ENCODE measurements at regions of chr18 and their contacts with region 1.

Region 1: DNA sequence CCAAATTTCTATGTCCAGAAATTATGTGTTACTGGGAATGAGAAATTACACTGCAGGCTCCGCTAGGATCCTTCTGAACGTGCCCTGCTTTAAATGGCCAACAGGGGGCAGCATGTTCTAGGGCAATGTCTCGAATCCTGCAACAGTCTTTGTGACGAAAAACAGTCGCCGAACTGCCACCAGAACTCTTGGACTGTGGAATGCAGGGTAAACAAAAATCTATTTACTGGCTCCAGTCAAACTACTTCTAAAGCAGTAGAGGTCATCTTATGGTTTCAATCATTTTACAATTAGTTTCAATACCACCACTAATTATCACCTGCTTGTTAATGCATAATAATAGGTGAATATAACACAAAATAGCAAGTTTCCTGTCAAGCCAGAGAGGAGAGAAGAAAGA is 9.8 kb upstream of the ZNF397 start:
- DNase-seq: peak; percentile 86
- ATAC-seq: peak; percentile 80
- H3K4me3 Mint-ChIP-seq: peak overlapping the region; percentile 40
- H3K27ac Mint-ChIP-seq: no peak overlapping the region
- H3K4me1 Mint-ChIP-seq: peaks cover 2% of the 10 kb centered on the region
- H3K27me3 Mint-ChIP-seq: no peaks in the 10 kb centered on the region

Region 2: GRCh38 chr18:35343936-35344735 is 113.1 kb after region 1 on chr18 and contains the start of gene ZNF24:
- CTCF ChIA-PET with region 1: interaction called, 3 read pairs
- POLR2A ChIA-PET with region 1: interaction called, 10 read pairs
- DNase-seq: peak; percentile 95
- ATAC-seq: peak; percentile 85
- H3K4me3 Mint-ChIP-seq: peak within 1 kb of the TSS; percentile 85
- H3K27ac Mint-ChIP-seq: peak within 1 kb of the TSS; percentile 89
- H3K4me1 Mint-ChIP-seq: peaks cover 35% of the 10 kb centered on the region
- H3K27me3 Mint-ChIP-seq: no peaks in the 10 kb centered on the region
- total RNA-seq, gene ZNF24: 48.8 to 53.2 TPM

Region 3: DNA sequence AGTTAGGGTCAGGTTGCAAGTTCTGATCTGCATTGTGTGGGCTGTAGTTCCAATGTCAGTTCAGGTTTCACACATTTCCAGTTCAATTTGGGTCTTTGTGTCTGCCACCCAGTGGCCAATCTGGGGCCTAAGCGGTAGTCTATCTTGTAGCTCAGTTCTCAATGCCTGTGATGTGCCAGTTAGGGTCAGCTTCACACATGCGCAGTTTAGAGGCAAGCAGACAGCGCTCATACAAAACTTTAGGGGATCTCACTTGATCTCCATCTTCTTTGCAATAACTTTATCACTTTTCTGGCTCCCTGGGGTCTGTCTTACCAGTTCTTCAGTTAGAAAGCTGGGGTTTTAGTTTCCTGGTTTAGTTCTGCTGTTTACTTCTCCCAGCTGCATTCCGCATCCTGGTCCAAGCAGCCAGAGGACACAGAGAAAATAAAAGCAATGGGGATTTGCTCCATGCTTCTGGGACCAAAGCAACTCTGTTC is 124.1 kb after region 1 on chr18:
- CTCF ChIA-PET with region 1: interaction called, 23 read pairs
- POLR2A ChIA-PET with region 1: no interaction called
- DNase-seq: peak; percentile 71
- ATAC-seq: peak; percentile 96
- H3K4me3 Mint-ChIP-seq: no peak overlapping the region
- H3K27ac Mint-ChIP-seq: no peak overlapping the region
- H3K4me1 Mint-ChIP-seq: peaks cover 5% of the 10 kb centered on the region
- H3K27me3 Mint-ChIP-seq: peaks cover 2% of the 10 kb centered on the region

Region 4: DNA sequence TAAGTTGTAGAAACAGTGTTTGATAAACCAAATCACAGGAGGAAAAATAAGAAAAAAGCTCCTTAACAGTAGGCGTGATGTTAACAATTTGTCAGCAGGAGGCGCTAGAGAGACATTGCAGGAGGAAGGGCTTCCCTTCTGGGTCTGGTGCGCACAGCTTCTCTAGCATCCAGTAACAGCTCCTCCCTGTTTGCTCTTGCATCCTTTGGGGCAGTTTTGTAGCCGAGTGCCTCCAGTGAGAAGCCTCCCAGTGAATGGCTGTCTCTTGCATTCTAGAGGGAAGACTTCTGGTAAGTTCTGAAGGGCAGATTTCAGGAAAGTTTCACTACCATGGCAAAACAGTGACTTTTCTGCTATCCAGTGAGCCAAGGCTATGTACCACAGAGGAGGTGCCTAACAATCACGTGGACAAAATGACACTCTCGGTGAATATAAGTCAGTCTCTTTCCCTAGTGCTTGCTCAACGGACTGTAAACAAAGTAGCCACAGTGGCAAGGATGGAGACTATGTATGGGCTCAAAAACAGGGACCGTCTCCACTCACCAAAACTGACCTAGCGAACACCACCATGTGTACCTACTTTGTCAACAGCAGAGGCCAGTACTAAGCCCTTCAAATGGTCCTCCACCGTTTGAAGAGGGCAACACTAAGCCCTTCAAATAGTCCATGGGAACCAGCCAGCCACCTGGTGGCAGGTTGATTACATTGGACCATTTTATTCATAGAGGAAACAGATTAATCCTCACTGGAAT is 155.7 kb after region 1 on chr18:
- CTCF ChIA-PET with region 1: interaction called, 21 read pairs
- POLR2A ChIA-PET with region 1: no interaction called
- DNase-seq: peak; percentile 78
- ATAC-seq: peak; percentile 94
- H3K4me3 Mint-ChIP-seq: no peak overlapping the region
- H3K27ac Mint-ChIP-seq: no peak overlapping the region
- H3K4me1 Mint-ChIP-seq: peaks cover 5% of the 10 kb centered on the region
- H3K27me3 Mint-ChIP-seq: peaks cover 29% of the 10 kb centered on the region

Region 5: DNA sequence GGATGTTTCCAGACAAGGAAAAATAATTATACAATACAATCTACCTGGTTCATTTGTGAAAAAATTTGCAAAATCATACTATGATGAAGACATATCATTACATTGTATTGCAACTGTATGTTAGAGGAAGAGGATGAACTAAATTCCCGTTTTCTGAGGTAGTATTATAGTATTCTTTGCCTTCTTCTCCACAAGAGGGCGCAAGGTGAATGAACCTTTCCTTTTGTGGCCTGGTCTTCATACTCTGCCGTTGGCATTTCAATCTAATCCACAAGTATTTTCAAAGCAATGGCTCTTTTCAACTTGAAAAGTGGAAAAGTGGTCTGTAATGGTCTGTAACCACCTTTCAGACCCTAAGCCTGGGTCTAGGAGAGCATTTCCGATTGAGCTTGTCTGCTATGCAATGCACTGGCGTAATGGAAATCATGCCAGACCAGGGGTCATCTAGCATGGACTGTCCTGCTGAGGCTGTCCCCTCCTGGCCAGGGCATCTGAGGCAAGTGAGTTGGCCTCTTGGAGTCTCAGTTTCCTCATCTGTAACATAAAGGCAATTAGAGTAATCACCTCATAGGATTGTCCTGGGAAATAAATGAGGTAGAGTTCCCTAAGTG is 176.9 kb after region 1 on chr18:
- CTCF ChIA-PET with region 1: interaction called, 10 read pairs
- POLR2A ChIA-PET with region 1: no interaction called
- DNase-seq: peak; percentile 65
- ATAC-seq: peak; percentile 78
- H3K4me3 Mint-ChIP-seq: no peak overlapping the region
- H3K27ac Mint-ChIP-seq: no peak overlapping the region
- H3K4me1 Mint-ChIP-seq: peaks cover 8% of the 10 kb centered on the region
- H3K27me3 Mint-ChIP-seq: peaks cover 6% of the 10 kb centered on the region